HepG2 (cell line): ENCODE measurements at regions of chr14 and their contacts with region 1.

Region 1: DNA sequence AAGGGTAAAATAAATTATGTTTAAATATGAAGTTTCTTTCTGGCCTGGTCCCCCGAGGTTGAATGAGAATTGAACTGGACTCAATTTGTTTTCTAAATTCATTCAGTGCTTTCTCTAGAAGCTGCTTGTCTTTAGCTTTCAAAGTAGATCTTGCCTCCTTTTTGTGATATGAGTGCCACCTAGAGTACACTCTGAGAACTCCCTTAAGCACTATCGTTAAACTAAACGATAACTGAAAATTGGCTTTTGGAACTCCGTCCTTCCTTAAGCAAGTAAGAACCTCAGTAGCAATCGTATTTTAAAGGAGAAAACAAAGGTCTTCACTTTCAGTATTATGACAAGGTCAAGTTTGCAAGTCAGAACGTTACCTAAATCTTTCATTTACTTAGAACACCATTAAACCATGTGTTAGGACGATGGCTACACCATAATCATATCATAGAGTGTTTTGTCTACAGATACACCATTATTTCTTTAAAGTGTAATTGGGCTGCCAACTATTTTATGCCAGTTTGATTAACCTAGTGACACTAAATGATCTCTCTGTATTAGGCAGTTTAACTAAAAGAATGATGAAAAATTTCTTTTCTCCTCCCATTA is 364.8 kb downstream of the SNAPC1 start:
- DNase-seq: peak; percentile 27
- ATAC-seq: peak; percentile 79
- H3K4me3 ChIP-seq: no peak overlapping the region
- H3K27ac ChIP-seq: no peak overlapping the region
- H3K4me1 ChIP-seq: no peaks in the 10 kb centered on the region
- H3K27me3 ChIP-seq: no peaks in the 10 kb centered on the region
- CTCF ChIP-seq: peak; percentile 73
- EP300 ChIP-seq: no peak
- POLR2A ChIP-seq: no peak
- RAD21 ChIP-seq: peak; percentile 47

Region 2: DNA sequence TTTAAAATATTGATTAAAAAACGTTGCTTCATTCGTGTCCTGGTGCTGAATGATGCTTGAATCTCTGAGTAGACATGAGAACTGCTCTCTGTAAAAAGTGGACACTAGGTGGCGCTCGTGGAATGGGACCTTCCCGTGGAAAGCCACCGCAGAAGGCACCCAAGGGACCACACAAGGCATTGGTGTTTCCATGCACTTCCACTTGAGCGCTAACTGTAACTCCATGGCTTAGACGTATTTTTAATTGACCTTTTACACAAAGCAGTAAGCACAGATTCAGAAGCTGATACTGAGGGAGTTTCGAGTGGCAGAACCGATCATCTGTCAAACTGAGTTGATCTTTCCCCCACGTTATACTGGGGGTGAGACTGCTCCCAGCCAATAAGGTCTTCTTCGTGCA is 670.3 kb before region 1 on chr14:
- CTCF ChIA-PET with region 1: interaction called, 3 read pairs
- POLR2A ChIA-PET with region 1: no interaction called
- in situ Hi-C with region 1: loop called (anchors 10 kb)
- intact Hi-C with region 1: loop called (anchors 1 kb)
- DNase-seq: peak; percentile 60
- ATAC-seq: peak; percentile 92
- H3K4me3 ChIP-seq: no peak overlapping the region
- H3K27ac ChIP-seq: no peak overlapping the region
- H3K4me1 ChIP-seq: peaks cover 8% of the 10 kb centered on the region
- H3K27me3 ChIP-seq: no peaks in the 10 kb centered on the region; a peak in 2 of 5 replicates
- CTCF ChIP-seq: peak; percentile 86
- EP300 ChIP-seq: no peak
- POLR2A ChIP-seq: no peak
- RAD21 ChIP-seq: peak; percentile 83

Region 3: DNA sequence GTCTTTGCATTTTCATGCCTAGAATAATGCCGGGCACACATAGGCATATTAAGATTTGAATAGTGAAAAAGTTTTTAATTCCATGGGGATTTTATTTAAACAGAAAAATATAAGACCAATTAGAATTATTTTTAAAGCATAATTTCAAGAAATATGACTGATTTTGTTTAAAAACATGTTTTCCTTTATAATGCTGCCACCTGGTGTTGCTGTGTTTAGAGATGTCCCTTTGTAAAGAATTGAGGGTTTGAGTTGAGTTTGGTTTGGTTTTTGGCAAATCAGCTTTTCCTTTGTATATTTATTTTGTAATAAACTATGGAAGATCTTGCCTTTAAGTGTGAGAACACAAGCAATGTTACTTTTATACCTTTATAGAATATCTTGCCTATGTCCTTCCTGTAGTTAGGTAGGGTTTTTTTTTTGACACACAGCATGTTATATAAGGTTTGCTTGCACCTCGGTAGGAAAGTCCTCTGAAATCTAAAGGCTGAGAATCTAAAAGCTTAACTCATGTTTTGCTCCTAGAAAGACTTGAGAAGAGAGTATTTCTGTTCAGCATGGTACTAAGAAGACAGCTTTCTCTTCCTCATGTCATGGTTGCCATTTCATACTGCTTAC is 396.1 kb before region 1 on chr14:
- CTCF ChIA-PET with region 1: no interaction called
- POLR2A ChIA-PET with region 1: no interaction called
- in situ Hi-C with region 1: no loop called
- intact Hi-C with region 1: no loop called
- DNase-seq: no peak
- ATAC-seq: no peak
- H3K4me3 ChIP-seq: no peak overlapping the region
- H3K27ac ChIP-seq: no peak overlapping the region
- H3K4me1 ChIP-seq: no peaks in the 10 kb centered on the region
- H3K27me3 ChIP-seq: no peaks in the 10 kb centered on the region
- CTCF ChIP-seq: peak; percentile 25; the same call in 1 of the 2 replicates
- EP300 ChIP-seq: no peak
- POLR2A ChIP-seq: no peak
- RAD21 ChIP-seq: 0 out of 2 replicates have a peak, but pooled peaks have one; percentile 15

Region 4: DNA sequence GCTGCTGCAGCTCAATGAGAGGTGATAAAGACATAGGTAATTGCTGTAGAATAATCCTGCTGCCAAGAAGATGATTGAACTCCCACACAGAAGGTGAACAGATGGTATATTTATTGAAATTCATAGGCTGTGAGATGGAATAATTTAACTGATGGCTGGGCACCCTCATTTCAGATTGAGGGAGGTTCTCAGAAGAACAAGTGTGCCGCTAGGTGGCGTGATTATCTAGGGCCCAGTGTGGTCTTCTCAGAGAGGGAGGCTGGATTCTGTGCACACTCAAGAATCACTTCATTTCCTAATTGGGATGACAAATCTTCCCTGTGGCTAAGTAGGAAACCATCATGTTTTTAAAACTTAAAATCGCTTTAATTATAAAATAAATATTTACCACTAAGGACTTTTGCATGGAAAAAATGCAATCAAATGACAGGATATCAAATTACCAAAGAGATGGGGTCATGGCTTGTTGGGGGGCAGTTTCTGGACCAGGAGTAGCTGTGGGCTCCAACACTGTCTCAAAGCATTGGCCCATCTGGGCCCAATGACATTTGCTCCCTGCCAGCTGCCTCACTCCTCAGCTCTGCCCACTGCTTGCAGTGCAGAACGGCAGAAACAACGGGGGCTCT is 232.4 kb before region 1 on chr14:
- CTCF ChIA-PET with region 1: interaction called, 25 read pairs
- POLR2A ChIA-PET with region 1: no interaction called
- in situ Hi-C with region 1: loop called (anchors 5 kb)
- intact Hi-C with region 1: loop called (anchors 1 kb)
- DNase-seq: peak; percentile 41
- ATAC-seq: peak; percentile 88
- H3K4me3 ChIP-seq: no peak overlapping the region
- H3K27ac ChIP-seq: no peak overlapping the region
- H3K4me1 ChIP-seq: no peaks in the 10 kb centered on the region
- H3K27me3 ChIP-seq: no peaks in the 10 kb centered on the region; a peak in 1 of 5 replicates
- CTCF ChIP-seq: peak; percentile 70
- EP300 ChIP-seq: no peak
- POLR2A ChIP-seq: no peak
- RAD21 ChIP-seq: no peak